Activated T-helper 1 cell treated with anti-CD3 and anti-CD28 coated beads, Interleukin-12 subunit alpha, Interleukin-12 subunit beta, Interleukin-2, Interleukin-4 antibody, amounts not matched to agents 30 ng/mL and 10 ng/mL and 1 ng/mL, durations not matched to agents 14 hours and 24 hours and 36 hours (primary cell): ENCODE measurements at regions of chr2 and their contacts with region 1.

Region 1: GRCh38 chr2:105744909-105745853 is at the start of gene NCK2:
- DNase-seq: no peak
- H3K4me3 Mint-ChIP-seq: peak within 1 kb of the TSS; percentile 93
- H3K27ac Mint-ChIP-seq: peak within 1 kb of the TSS; percentile 94
- H3K4me1 Mint-ChIP-seq: peaks cover 84% of the 10 kb centered on the region
- H3K27me3 Mint-ChIP-seq: no peaks in the 10 kb centered on the region
- total RNA-seq, gene NCK2: 79.9 and 86.8 TPM in 2 replicates

Region 2: DNA sequence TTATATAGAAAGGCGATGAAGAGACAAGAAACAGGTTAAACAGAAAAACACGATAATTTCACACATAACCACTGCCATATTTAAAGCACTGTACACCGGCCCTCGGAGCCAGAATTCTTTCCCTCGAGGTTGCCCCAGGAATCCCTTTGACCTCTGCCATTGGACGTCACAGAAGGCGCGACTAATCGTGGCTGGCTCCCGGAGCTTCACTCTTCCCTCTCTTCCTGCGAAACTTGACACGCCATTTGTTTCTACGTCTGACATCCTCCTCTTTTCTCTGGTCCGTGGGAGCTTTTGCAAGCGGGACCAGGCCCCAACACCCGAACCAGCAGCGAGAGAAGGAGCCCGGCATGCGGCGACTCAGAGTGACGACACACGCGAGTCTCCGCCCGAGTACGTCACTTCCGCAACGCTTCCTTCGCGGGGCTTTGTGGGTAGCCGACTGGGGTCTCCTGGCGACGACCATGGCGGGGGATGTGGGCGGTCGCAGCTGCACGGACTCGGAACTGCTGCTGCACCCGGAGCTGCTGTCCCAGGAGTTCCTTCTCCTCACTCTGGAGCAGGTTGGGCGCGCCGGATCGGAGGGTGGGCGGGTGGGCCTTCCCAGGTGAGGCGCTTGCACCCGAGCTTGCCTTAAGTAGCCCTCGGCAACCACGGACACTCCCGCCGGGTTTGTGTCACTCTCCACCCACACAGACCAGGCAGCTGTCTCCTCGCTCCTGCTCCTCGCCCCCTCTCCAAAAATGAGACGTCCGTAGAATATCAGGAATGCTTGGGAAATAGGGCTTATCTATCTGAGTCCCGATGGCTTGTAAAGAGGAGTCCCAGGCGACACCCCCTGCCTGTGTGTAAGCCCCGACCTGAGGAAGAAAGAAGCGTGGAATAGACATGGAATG is 407.8 kb before region 1 on chr2 and contains the start of gene C2orf49:
- intact Hi-C with region 1: loop called (anchors 2 kb)
- DNase-seq: peak; percentile 85
- H3K4me3 Mint-ChIP-seq: peak within 1 kb of the TSS; percentile 100
- H3K27ac Mint-ChIP-seq: peak within 1 kb of the TSS; percentile 100
- H3K4me1 Mint-ChIP-seq: peaks cover 50% of the 10 kb centered on the region
- H3K27me3 Mint-ChIP-seq: no peaks in the 10 kb centered on the region
- total RNA-seq, gene C2orf49: 18.5 and 23.4 TPM in 2 replicates

Region 3: GRCh38 chr2:105645031-105645937 is 99.9 kb before region 1 on chr2:
- intact Hi-C with region 1: loop called (anchors 1 kb)
- DNase-seq: no peak
- H3K4me3 Mint-ChIP-seq: no peak overlapping the region
- H3K27ac Mint-ChIP-seq: no peak overlapping the region
- H3K4me1 Mint-ChIP-seq: no peaks in the 10 kb centered on the region
- H3K27me3 Mint-ChIP-seq: peaks cover 10% of the 10 kb centered on the region

Region 4: GRCh38 chr2:105761931-105762515 is 16.8 kb after region 1 on chr2:
- intact Hi-C with region 1: loop called (anchors 2 kb)
- DNase-seq: no peak
- H3K4me3 Mint-ChIP-seq: peak overlapping the region; percentile 11
- H3K27ac Mint-ChIP-seq: peak overlapping the region; percentile 75
- H3K4me1 Mint-ChIP-seq: peaks cover 87% of the 10 kb centered on the region
- H3K27me3 Mint-ChIP-seq: no peaks in the 10 kb centered on the region

Region 5: GRCh38 chr2:105802587-105802986 is 57.4 kb after region 1 on chr2:
- intact Hi-C with region 1: loop called (anchors 1 kb)
- DNase-seq: peak; percentile 70
- H3K4me3 Mint-ChIP-seq: peak overlapping the region; percentile 58
- H3K27ac Mint-ChIP-seq: peak overlapping the region; percentile 88
- H3K4me1 Mint-ChIP-seq: peaks cover 93% of the 10 kb centered on the region
- H3K27me3 Mint-ChIP-seq: no peaks in the 10 kb centered on the region

Region 6: GRCh38 chr2:105873721-105874120 is 128.5 kb after region 1 on chr2:
- intact Hi-C with region 1: loop called (anchors 5 kb)
- DNase-seq: peak; percentile 44
- H3K4me3 Mint-ChIP-seq: peak overlapping the region; percentile 61
- H3K27ac Mint-ChIP-seq: peak overlapping the region; percentile 89
- H3K4me1 Mint-ChIP-seq: peaks cover 87% of the 10 kb centered on the region
- H3K27me3 Mint-ChIP-seq: no peaks in the 10 kb centered on the region

Region 7: GRCh38 chr2:106147159-106147558 is 402.0 kb after region 1 on chr2:
- intact Hi-C with region 1: loop called (anchors 1 kb)
- DNase-seq: no peak
- H3K4me3 Mint-ChIP-seq: no peak overlapping the region
- H3K27ac Mint-ChIP-seq: peak overlapping the region; percentile 8
- H3K4me1 Mint-ChIP-seq: peaks cover 47% of the 10 kb centered on the region
- H3K27me3 Mint-ChIP-seq: no peaks in the 10 kb centered on the region